Psoas muscle (tissue), 8 donors: ENCODE measurements at regions of chr1 and their contacts with region 1.

Region 1: DNA sequence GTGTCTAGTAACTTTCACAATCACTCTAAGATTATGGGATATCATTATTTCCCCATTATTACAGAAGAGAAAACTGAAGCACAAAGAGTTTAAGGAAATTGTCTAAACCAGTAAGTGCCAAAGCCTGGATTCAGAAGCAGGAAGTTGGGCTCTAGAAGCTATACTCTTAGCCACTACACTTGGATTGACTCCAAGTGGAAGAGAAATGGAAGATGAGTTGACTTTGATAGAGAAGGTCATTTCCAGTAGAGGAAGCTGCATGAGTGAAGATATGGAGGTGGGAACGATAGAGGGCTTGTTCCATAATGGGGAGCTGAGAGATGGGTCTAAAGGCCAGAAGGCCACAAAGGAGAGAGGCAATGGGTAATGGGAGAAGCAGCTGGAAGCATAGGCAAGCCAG is 11.7 kb upstream of the TDRD10 start:
- DNase-seq: no peak
- ATAC-seq: no peak
- H3K4me3 ChIP-seq: no peak overlapping the region
- H3K27ac ChIP-seq: no peak overlapping the region
- H3K4me1 ChIP-seq: peaks cover 14% of the 10 kb centered on the region
- H3K27me3 ChIP-seq: peaks cover 0 to 5% (median 0%) of the 10 kb centered on the region in 3 donors
- CTCF ChIP-seq: no peak

Region 2: DNA sequence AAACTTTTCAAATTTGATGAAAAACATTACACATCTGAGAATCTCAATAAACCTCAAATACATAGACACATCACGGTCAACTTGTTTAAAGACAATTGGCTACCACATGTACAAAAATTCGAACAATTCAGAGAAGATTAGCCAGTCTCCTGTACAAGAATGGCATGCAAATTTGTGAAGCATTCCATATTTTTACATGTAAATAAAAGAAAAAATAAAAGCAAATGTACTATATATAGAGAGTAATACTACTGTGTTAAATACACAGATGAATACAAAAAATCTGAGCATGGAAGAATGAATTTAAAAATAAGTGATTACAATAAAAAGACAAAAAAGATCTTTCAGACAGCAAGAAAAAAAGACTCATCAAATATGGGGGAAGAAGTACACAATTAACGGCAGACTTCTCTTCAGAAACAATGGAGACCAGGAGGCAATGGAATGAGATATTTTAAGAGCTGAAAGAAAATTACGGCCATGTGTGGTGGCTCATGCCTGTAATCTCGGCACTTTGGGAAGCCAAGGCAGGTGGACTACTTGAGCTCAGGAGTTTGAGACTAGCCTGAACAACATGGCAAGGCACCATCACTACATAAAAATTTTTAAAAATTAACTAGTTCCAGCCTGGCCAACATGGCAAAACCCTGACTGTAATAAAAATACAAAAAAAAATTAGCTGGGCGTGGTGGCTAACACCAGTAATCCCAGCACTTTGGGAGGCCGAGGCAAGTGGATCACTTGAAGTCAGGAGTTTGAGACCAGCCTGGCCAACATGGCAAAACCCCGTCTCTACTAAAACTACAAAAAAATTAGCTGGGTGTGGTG is 194.7 kb before region 1 on chr1:
- intact Hi-C with region 1: no loop called
- DNase-seq: no peak
- ATAC-seq: no peak
- H3K4me3 ChIP-seq: no peak overlapping the region
- H3K27ac ChIP-seq: no peak overlapping the region
- H3K4me1 ChIP-seq: no peaks in the 10 kb centered on the region
- H3K27me3 ChIP-seq: no peaks in the 10 kb centered on the region
- CTCF ChIP-seq: no peak

Region 3: DNA sequence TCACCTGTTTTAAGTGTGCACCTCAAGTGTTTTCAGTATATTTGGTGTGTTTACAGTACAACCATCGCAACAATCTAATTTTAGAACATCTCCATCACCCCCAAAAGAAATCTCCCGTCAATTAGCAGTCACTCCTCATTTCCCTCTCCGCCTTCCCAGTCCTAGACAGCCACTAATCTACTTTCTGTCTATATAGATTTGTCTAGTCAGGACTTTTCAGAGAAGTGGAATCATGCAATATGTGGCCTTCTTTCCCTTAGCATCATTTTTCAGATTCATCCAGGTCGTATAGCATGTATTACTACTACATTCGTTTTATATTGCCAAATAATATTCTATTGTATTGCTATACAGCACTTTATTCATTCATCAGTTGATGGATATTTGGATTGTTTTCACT is 13.6 kb after region 1 on chr1:
- intact Hi-C with region 1: loop called in 1 of 2 experiments (anchors 2 kb)
- DNase-seq: no peak
- ATAC-seq: no peak
- H3K4me3 ChIP-seq: no peak overlapping the region
- H3K27ac ChIP-seq: no peak overlapping the region
- H3K4me1 ChIP-seq: no peaks in the 10 kb centered on the region
- H3K27me3 ChIP-seq: peaks cover 3 to 71% (median 16%) of the 10 kb centered on the region in 3 donors
- CTCF ChIP-seq: no peak

Region 4: DNA sequence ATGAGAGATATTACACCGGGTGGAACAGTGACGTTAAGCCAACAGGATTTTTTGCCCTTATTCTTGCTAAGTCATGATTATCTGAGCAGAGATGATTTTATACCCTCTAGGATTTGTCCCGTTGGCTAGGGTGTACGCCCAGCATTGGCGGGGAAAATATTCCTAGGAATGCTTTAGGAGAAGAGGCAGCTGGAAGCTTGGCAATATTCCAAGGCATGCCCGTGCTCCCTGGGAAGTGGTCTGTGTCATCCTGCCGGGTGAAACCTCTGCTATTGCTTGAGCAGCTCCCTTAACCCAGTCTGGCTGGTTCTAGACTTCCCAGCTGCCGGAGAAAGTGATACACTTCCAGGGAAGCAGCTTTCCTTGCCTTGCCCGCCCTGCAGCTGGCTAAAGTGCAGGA is 93.5 kb after region 1 on chr1:
- intact Hi-C with region 1: no loop called
- DNase-seq: no peak
- ATAC-seq: no peak
- H3K4me3 ChIP-seq: no peak overlapping the region
- H3K27ac ChIP-seq: no peak overlapping the region
- H3K4me1 ChIP-seq: no peaks in the 10 kb centered on the region
- H3K27me3 ChIP-seq: no peaks in the 10 kb centered on the region
- CTCF ChIP-seq: no peak